OCI-LY7 (cell line): ENCODE measurements at regions of chr2 and their contacts with region 1.

Region 1: DNA sequence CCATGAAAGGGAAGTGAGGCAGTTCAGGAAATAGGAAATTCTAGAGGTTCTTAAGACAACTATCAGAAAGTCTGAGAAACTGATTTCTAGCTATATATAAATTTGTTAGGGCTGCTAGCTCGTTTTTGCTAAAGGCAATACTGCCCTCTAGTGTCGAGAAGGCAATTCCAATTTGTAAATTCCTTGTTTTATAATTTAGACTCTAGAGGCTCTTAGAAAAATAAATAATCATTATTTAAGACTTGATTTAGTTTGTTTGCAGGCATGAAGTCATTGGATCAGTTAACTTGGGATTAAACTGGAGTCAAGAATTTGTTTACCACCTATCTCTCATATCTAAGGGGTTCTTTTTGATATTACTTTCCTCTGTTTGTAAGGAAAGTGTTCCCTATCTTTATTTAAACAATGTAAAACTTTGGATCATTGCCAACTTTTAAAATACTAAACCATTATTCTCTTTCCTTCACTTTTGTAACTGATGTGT is 66.2 kb downstream of the ACVR2A start:
- DNase-seq: peak; percentile 58
- H3K4me3 ChIP-seq: no peak overlapping the region
- H3K27ac ChIP-seq: no peak overlapping the region
- H3K4me1 ChIP-seq: no peaks in the 10 kb centered on the region
- CTCF ChIP-seq: peak; percentile 95

Region 2: DNA sequence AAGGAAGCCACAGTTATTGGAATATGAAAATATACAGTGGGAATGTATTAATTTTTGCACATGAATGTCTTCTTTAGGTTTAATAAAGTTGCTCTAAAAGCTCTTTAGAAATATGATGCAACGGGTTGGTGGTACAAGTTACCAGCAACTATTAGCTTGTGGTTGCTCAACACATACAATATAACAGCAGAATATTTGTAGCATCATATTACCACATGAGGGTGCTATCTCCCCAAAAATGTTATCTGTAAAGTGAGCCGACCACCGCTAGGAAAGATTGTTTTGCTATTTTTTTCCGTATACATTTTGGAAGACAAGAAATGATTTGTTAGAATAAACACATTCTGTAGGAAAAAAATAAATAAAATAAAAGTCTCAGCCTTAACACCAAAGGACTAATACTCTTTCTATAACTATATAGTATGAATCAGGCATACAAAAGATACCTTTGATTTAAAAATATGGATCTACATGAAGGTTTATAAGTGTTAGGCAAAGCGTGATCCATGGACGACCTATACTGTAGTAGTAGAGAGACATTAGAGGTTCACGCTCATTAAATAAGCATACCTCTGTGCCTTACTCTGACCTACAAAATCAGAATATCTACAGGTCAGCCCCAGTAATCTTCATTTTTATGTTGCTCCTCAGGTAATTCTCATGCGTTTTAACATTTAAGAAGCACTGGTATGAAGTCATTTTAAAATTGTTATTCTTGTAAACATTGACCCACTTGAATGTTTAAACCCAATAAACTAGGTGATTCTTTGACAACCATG is 1176.8 kb before region 1 on chr2:
- CTCF ChIA-PET with region 1: no interaction called
- POLR2A ChIA-PET with region 1: no interaction called
- intact Hi-C with region 1: loop called (anchors 5 kb)
- DNase-seq: peak; percentile 22
- H3K4me3 ChIP-seq: no peak overlapping the region
- H3K27ac ChIP-seq: no peak overlapping the region
- H3K4me1 ChIP-seq: no peaks in the 10 kb centered on the region
- CTCF ChIP-seq: peak; percentile 76

Region 3: DNA sequence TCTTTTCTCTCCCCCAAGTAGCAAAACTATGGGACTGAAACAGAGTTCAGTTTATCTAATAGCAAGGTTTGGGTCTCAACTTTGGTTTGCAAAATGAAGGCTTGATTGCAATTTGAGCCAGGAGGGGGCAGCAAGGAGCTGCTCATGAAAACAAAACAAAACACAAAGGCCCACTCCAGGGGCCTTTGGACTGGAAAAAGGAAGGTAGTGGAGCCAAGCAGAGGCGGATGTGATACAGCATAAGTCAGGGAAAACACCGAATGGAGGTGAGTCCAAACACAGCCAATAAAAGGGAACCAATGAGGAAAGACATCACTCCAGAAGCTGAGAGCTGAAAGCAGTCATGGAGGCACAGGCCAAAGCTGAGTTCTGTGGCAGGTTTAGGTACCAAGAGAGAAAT is 865.9 kb before region 1 on chr2:
- CTCF ChIA-PET with region 1: no interaction called
- POLR2A ChIA-PET with region 1: no interaction called
- intact Hi-C with region 1: loop called (anchors 2 kb)
- DNase-seq: peak; percentile 20
- H3K4me3 ChIP-seq: no peak overlapping the region
- H3K27ac ChIP-seq: no peak overlapping the region
- H3K4me1 ChIP-seq: no peaks in the 10 kb centered on the region
- CTCF ChIP-seq: peak; percentile 80

Region 4: GRCh38 chr2:147082850-147083522 is 828.0 kb before region 1 on chr2:
- CTCF ChIA-PET with region 1: no interaction called
- POLR2A ChIA-PET with region 1: no interaction called
- intact Hi-C with region 1: loop called (anchors 2 kb)
- DNase-seq: peak; percentile 44
- H3K4me3 ChIP-seq: no peak overlapping the region
- H3K27ac ChIP-seq: no peak overlapping the region
- H3K4me1 ChIP-seq: no peaks in the 10 kb centered on the region
- CTCF ChIP-seq: peak; percentile 93